ENCODE measurements at regions of chr10 and their contacts with region 1.

Region 1: DNA sequence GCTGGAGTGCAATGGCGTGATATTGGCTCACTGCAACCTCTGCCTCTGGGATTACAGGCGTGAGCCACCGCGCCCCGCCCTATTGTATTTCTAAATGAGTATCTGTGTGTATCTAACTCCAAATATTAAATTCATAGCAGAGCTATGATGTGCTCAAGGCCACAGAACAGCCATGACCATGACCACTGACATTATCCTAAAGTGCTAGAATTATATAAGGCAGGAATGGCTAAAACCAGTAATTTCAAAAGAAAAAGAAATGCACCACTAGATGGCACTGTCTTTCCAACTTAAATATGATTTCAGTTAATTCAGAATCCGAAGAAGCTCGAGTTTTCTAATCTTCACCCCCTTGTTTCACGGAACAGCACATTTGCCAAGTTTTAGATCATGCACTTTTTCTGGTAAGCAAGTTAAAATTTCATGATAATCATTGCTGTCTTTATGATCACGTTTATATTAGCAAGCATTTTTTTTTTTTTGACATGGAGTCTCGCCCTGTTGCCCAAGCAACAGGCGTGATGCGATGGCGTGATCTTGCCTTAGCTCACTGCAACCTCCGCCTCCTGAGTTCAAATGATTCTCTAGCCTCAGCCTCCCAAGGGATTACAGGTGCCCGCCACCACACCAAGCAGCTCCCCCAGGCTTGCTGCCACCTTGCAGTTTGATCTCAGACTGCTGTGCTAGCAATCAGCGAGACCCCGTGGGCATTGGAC is 65.3 kb downstream of the OR13A1 start:
- DNase-seq: peak in 2 of 3 donors; percentile 51 to 55
- ATAC-seq: peak; percentile 63 to 64
- H3K4me3 ChIP-seq: no peak overlapping the region
- H3K27ac ChIP-seq: no peak overlapping the region
- H3K4me1 ChIP-seq: no peaks in the 10 kb centered on the region
- H3K27me3 ChIP-seq: no peaks in the 10 kb centered on the region

Region 2: GRCh38 chr10:45453639-45454255 is 203.6 kb after region 1 on chr10:
- intact Hi-C with region 1: loop called in 1 of 4 experiments (anchors 10 kb)
- DNase-seq: peak in 1 of 3 donors; percentile 47
- ATAC-seq: peak; percentile 32
- H3K4me3 ChIP-seq: no peak overlapping the region
- H3K27ac ChIP-seq: peak overlapping the region; percentile 46
- H3K4me1 ChIP-seq: no peaks in the 10 kb centered on the region
- H3K27me3 ChIP-seq: no peaks in the 10 kb centered on the region